Psoas muscle (tissue), 8 donors: ENCODE measurements at regions of chr15 and their contacts with region 1.

Region 1: GRCh38 chr15:50876989-50877360 is 31.5 kb upstream of the AP4E1 start:
- DNase-seq: peak in 1 of 2 donors; percentile 29
- ATAC-seq: peak; percentile 75 to 90 (median 81)
- H3K4me3 ChIP-seq: peak overlapping the region; percentile 58
- H3K27ac ChIP-seq: peak overlapping the region; percentile 58
- H3K4me1 ChIP-seq: peaks cover 11% of the 10 kb centered on the region
- H3K27me3 ChIP-seq: no peaks in the 10 kb centered on the region
- CTCF ChIP-seq: peak; percentile 97

Region 2: DNA sequence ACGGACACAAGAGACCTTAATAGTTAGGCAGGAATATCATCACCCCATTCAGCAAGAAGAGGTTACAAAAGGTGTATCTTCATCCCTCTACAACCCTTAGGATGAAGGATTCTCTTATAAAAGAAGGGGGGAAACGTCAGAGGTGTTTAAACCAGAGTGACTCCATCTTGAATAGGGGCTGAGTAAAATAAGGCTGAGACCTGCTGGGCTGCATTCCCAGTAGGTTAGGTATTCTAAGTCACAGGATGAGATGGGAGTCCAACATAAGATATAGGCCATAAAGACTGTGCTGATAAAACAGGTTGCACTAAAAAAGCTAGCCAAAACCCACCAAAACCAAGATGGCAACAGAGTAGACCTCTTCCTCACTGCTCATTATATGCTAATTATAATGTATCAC is 206.9 kb before region 1 on chr15:
- intact Hi-C with region 1: loop called in 1 of 2 experiments (anchors 5 kb)
- DNase-seq: no peak
- ATAC-seq: peak in 1 of 4 donors; percentile 10
- H3K4me3 ChIP-seq: no peak overlapping the region
- H3K27ac ChIP-seq: no peak overlapping the region
- H3K4me1 ChIP-seq: peaks cover 9% of the 10 kb centered on the region
- H3K27me3 ChIP-seq: no peaks in the 10 kb centered on the region
- CTCF ChIP-seq: no peak

Region 3: GRCh38 chr15:50681467-50681866 is 195.5 kb before region 1 on chr15:
- intact Hi-C with region 1: loop called (anchors 5 kb)
- DNase-seq: no peak
- ATAC-seq: no peak
- H3K4me3 ChIP-seq: no peak overlapping the region
- H3K27ac ChIP-seq: no peak overlapping the region
- H3K4me1 ChIP-seq: peaks cover 15% of the 10 kb centered on the region
- H3K27me3 ChIP-seq: no peaks in the 10 kb centered on the region
- CTCF ChIP-seq: no peak

Region 4: GRCh38 chr15:50686468-50687301 is 190.3 kb before region 1 on chr15 and contains the start of gene TRPM7:
- intact Hi-C with region 1: loop called (anchors 5 kb)
- DNase-seq: peak; percentile 94 to 95
- ATAC-seq: peak; percentile 97 to 98 (median 97)
- H3K4me3 ChIP-seq: peak within 1 kb of the TSS; percentile 98
- H3K27ac ChIP-seq: peak within 1 kb of the TSS; percentile 95
- H3K4me1 ChIP-seq: peaks cover 22% of the 10 kb centered on the region
- H3K27me3 ChIP-seq: no peaks in the 10 kb centered on the region
- CTCF ChIP-seq: no peak
- total RNA-seq, gene TRPM7: 8.0 to 11.4 (median 10.7) TPM

Region 5: DNA sequence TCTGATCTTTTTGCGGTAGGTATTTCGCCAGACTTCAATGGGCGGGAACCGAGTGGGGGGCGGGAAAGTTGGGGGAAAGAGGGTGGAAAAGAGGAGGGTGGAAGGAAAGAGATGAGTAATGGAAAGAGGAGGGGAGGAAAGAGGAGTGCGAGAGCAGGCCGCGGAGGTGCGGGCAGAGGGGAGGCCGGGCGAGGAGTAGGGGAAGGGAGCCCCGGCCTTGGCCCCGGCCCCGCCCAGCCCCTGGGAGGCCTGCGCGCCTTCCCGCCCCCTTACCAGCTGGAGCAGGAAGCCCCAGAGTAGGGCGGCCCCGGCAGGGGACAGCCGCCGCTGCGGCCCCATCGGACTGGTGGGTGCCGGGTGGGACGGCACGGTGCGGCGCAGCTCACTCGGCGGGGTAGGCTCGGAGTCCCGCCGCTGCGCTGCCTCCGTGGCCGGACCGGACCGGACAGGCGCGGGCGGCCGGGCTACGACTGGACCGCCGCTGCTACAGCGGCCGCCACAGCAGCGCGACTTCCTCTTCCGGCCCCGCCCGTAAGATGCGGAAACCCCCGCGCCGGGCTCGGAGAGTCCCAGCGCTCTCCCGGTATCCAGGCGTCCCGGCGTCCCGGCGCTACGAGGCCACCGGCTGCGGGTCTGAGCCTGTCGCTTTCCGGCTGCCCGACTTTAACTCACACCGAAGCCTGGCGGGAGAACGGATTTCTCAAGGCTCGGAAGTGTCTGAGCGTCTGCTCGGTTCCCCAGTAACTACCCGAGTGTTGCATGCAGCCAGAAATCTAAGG is 111.6 kb before region 1 on chr15 and contains the start of gene SPPL2A:
- intact Hi-C with region 1: loop called (anchors 2 to 5 kb)
- DNase-seq: peak; percentile 90 to 93
- ATAC-seq: peak; percentile 58 to 75 (median 66)
- H3K4me3 ChIP-seq: peak within 1 kb of the TSS; percentile 90
- H3K27ac ChIP-seq: peak within 1 kb of the TSS; percentile 99
- H3K4me1 ChIP-seq: peaks cover 28% of the 10 kb centered on the region
- H3K27me3 ChIP-seq: no peaks in the 10 kb centered on the region
- CTCF ChIP-seq: no peak
- total RNA-seq, gene SPPL2A: 124 to 303 (median 255) TPM

Region 6: DNA sequence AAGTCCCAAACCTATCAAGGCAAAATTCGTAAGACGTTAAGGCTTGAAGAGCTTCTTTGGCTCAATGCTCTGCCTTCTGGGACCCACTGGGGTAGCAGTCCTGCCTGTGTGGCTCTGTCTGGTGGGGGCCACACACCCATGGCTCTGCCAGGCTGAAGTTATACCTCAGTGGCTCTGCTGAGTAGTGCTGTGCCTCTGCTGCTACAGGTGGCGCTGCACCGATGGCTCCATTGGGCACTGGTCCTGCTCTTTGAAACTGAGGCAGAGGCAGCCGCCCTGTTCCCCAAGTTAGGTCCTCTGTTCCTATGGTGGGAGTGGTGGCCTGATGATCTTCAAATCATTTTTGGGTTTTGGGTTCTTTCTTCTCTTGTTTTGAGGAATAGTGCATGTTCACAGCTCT is 36.5 kb before region 1 on chr15:
- intact Hi-C with region 1: loop called in 1 of 2 experiments (anchors 1 kb)
- DNase-seq: no peak
- ATAC-seq: no peak
- H3K4me3 ChIP-seq: no peak overlapping the region
- H3K27ac ChIP-seq: no peak overlapping the region
- H3K4me1 ChIP-seq: no peaks in the 10 kb centered on the region
- H3K27me3 ChIP-seq: no peaks in the 10 kb centered on the region
- CTCF ChIP-seq: no peak